ENCODE measurements at regions of chr9 and their contacts with region 1.

Region 1: GRCh38 chr9:131627648-131628458 is 82.5 kb downstream of the PRRT1B start:
- DNase-seq: peak; percentile 78
- ATAC-seq: peak; percentile 90
- H3K4me3 Mint-ChIP-seq: peak overlapping the region; percentile 20
- H3K27ac Mint-ChIP-seq: peak overlapping the region; percentile 88
- H3K4me1 Mint-ChIP-seq: peaks cover 41% of the 10 kb centered on the region
- H3K27me3 Mint-ChIP-seq: no peaks in the 10 kb centered on the region
- CTCF ChIP-seq: no peak

Region 2: GRCh38 chr9:131598121-131598520 is 29.7 kb before region 1 on chr9:
- CTCF ChIA-PET with region 1: no interaction called
- POLR2A ChIA-PET with region 1: no interaction called
- intact Hi-C with region 1: no loop called
- DNase-seq: no peak
- ATAC-seq: no peak
- H3K4me3 Mint-ChIP-seq: no peak overlapping the region
- H3K27ac Mint-ChIP-seq: no peak overlapping the region
- H3K4me1 Mint-ChIP-seq: no peaks in the 10 kb centered on the region
- H3K27me3 Mint-ChIP-seq: no peaks in the 10 kb centered on the region
- CTCF ChIP-seq: no peak

Region 3: DNA sequence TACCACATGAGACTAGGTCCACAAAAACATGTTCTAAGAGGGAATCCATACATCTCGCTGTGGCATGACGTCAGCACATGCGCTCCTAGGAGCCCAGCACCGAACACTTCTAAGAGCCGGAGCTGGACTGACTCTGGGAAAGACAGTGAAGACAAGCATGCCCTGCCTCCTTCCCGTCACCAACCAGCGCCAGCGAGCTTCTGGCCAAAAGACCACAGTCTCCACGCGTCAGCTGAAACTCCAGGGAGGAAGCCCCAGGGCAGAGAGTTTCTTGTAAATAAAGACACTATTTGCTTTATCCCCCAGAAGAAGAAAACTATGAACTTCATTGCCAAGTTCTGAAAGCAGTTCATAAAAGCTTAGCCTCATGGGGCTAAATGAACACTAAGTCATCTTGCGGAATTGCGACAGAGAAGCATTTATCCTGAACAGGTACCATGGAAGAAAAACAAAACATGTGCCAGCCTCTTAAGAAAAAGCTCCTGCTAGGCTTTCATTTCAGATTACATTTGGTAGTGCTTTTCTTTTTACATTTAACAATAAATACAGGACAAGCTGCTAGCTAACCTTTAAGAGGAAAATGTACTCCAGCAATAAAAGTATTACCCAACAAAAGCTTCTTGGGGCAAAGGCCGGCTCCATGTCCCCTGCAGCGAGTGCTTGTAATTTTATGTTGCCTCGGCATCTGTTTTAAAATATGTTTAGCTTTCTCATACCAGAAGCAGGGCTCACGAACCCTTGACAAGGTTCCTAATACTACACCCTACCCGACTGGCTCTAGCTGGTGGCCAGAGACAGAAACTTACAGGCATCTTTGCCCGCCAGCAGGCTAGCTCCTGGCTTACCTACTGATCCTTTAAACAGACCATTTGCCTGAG is 14.0 kb after region 1 on chr9:
- CTCF ChIA-PET with region 1: interaction called, 3 read pairs
- POLR2A ChIA-PET with region 1: interaction called, 17 read pairs
- intact Hi-C with region 1: no loop called
- DNase-seq: no peak
- ATAC-seq: no peak
- H3K4me3 Mint-ChIP-seq: no peak overlapping the region
- H3K27ac Mint-ChIP-seq: peak overlapping the region; percentile 96
- H3K4me1 Mint-ChIP-seq: peaks cover 49% of the 10 kb centered on the region
- H3K27me3 Mint-ChIP-seq: no peaks in the 10 kb centered on the region
- CTCF ChIP-seq: no peak